ENCODE measurements at regions of chr1 and their contacts with region 1.

Region 1: DNA sequence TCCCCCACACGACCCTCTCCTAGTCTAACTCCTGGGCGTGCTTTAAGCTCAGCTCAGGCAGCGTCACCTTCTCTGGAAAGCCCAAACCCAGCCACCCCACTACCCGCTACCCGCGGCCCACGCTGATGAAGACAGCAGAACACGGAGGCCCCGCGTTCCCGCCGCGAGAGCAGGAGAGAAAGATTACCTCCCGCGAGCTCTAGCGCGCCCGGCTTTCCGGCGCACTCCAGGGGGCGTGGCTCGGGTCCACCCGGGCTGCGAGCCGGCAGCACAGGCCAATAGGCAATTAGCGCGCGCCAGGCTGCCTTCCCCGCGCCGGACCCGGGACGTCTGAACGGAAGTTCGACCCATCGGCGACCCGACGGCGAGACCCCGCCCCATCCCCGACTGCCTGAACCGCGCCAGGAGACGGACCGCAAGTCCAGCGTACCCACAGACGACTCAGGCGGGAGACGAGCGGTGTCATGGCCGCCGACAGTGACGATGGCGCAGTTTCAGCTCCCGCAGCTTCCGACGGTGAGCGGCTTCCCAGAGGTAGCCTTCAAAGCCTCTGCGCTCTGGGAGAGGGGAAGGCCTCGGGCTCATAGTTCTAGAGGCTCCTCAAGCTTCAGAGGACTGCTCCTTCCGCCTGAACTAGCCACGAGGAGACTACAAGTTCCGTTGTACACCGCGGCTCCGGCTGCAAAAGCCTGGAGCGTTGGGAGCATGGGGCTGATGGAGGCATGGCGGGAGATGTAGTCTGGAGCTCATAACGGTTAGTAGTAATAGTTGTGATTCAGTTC is at the starts of genes MUTYH and TOE1:
- DNase-seq: peak; percentile 92
- ATAC-seq: peak; percentile 88
- H3K4me3 ChIP-seq: peak within 1 kb of the TSS; percentile 83 to 97 (median 86)
- H3K4me3 Mint-ChIP-seq: peak within 1 kb of the TSS; percentile 91
- H3K27ac ChIP-seq: peak within 1 kb of the TSS; percentile 96
- H3K27ac Mint-ChIP-seq: peak within 1 kb of the TSS; percentile 100
- H3K4me1 ChIP-seq: peaks cover 20 to 33% of the 10 kb centered on the region in 2 donors
- H3K4me1 Mint-ChIP-seq: peaks cover 38% of the 10 kb centered on the region
- H3K27me3 ChIP-seq: no peaks in the 10 kb centered on the region
- H3K27me3 Mint-ChIP-seq: no peaks in the 10 kb centered on the region
- CTCF ChIP-seq: no peak
- total RNA-seq, gene MUTYH: 68.1 and 68.5 TPM in 2 replicates
- total RNA-seq, gene TOE1: 21.9 and 24.7 TPM in 2 replicates

Region 2: DNA sequence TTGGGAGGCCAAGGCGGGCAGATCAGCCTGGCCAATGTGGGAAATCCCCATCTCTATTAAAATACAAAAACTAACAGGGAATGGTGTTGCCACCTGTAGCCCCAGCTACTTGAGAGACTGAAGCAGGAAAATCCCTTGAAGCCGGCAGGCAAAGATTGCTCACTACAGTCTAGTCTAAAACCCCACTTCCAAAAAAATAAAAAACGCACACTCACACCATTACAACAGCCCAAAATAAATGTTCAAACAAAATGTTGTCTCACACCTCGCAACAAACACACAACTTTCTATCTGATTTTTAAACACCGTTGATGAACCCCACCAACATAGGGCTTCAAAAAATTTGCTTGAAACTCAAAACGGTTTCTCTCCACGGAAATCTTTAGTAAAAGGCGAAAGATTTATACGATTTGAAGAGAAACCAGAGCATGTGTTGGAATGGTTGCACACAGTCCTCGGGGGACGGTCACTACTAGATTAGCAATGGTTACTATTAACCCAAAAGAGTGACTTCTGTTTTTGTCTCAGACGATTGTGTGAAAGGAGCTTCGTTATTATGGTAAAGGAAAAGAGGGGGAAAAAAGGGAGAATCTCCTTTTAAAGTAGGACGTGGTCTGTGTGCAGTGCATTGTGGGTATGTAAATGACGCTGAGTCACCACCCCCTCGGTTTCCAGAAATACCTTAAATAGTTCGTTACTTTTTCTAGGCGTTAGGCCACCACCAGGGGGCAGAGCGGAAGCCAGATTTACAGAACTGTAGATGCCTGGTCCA is 609.1 kb before region 1 on chr1 and contains the start of gene RNU5D-1:
- CTCF ChIA-PET with region 1: interaction called, 10 read pairs
- POLR2A ChIA-PET with region 1: interaction called, 11 read pairs
- intact Hi-C with region 1: no loop called
- DNase-seq: peak; percentile 97
- ATAC-seq: peak; percentile 74
- H3K4me3 ChIP-seq: peak within 1 kb of the TSS; percentile 17 to 68 (median 50)
- H3K4me3 Mint-ChIP-seq: peak within 1 kb of the TSS; percentile 92
- H3K27ac ChIP-seq: peak within 1 kb of the TSS; percentile 93 to 96
- H3K27ac Mint-ChIP-seq: peak within 1 kb of the TSS; percentile 100
- H3K4me1 ChIP-seq: peaks cover 12 to 24% of the 10 kb centered on the region in 2 donors
- H3K4me1 Mint-ChIP-seq: peaks cover 24% of the 10 kb centered on the region
- H3K27me3 ChIP-seq: no peaks in the 10 kb centered on the region
- H3K27me3 Mint-ChIP-seq: no peaks in the 10 kb centered on the region
- CTCF ChIP-seq: peak; percentile 87
- total RNA-seq, gene RNU5D-1: not detected in 2 replicates

Region 3: DNA sequence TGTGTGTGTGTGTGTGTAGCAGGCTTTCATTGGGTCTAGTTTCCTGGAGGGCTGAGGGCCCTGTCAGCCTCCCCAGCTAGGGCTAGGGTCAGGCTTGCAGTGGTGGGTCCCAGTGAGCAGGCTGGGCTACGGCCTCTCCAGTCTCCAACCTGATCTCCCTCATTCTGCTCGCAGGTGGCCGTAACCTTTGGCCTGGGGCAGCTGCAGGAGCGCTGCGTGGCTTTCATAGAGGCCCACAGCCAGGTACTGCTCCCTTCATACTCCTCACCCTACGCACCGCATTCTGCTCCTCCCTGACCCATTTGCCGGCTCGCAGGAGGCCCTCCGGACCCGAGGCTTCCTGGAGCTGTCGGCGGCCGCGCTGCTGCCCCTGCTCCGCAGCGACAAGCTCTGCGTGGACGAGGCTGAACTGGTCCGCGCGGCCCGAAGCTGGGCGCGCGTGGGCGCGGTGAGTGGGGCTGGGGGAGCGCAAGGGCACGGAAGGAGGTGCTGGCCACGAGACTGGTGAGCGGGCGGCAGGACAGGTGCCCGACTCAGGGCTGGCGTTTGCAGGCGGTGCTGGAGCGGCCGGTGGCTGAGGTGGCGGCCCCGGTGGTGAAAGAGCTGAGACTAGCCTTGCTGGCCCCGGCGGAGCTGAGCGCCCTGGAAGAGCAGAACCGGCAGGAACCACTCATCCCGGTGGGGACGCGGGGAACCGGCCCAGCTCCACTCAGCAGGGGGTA is 527.0 kb before region 1 on chr1:
- CTCF ChIA-PET with region 1: no interaction called
- POLR2A ChIA-PET with region 1: no interaction called
- intact Hi-C with region 1: loop called (anchors 2 kb)
- DNase-seq: no peak
- ATAC-seq: no peak
- H3K4me3 ChIP-seq: peak overlapping the region in 4 of 5 experiments; percentile 51 to 76 (median 68)
- H3K4me3 Mint-ChIP-seq: peak overlapping the region; percentile 92
- H3K27ac ChIP-seq: peak overlapping the region; percentile 70 to 86
- H3K27ac Mint-ChIP-seq: peak overlapping the region; percentile 37
- H3K4me1 ChIP-seq: peaks cover 38 to 53% of the 10 kb centered on the region in 2 donors
- H3K4me1 Mint-ChIP-seq: peaks cover 58% of the 10 kb centered on the region
- H3K27me3 ChIP-seq: no peaks in the 10 kb centered on the region
- H3K27me3 Mint-ChIP-seq: no peaks in the 10 kb centered on the region
- CTCF ChIP-seq: no peak

Region 4: DNA sequence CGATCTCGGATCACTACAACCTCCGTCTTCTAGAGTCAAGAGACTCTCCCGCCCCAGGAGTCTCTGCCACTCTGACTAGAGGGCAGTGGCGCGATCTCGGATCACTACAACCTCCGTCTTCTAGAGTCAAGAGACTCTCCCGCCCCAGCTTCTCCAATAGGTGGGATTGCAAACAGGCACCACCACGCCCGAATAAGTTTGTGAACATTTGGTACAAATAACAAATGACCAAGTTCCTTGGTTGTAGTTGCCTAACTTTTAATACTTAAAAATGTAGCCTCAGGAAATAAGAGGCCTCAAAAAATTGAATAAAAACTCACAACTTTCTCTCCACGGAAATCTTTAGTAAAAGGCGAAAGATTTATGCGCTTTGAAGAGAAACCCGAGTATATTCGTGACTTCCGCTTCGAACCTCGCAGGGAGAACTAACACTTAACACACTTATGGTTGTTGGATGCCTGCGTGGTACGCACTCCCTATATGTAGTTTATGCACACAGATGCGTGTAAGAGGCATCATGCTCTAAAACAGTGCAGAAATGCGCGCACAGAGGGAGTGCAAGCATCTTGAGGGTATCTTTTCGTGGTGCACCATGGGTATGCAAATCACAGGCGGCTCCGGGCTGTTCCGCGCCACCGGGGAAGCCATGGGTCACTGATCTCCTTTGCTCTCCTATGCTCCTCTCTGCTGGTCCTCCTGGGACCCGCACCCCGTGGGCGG is 520.2 kb before region 1 on chr1:
- CTCF ChIA-PET with region 1: no interaction called
- POLR2A ChIA-PET with region 1: no interaction called
- intact Hi-C with region 1: loop called (anchors 1 kb)
- DNase-seq: peak; percentile 95
- ATAC-seq: peak; percentile 82
- H3K4me3 ChIP-seq: peak overlapping the region; percentile 56 to 80 (median 66)
- H3K4me3 Mint-ChIP-seq: peak overlapping the region; percentile 93
- H3K27ac ChIP-seq: peak overlapping the region; percentile 99 to 100
- H3K27ac Mint-ChIP-seq: peak overlapping the region; percentile 100
- H3K4me1 ChIP-seq: peaks cover 16 to 24% of the 10 kb centered on the region in 2 donors
- H3K4me1 Mint-ChIP-seq: peaks cover 35% of the 10 kb centered on the region
- H3K27me3 ChIP-seq: no peaks in the 10 kb centered on the region
- H3K27me3 Mint-ChIP-seq: no peaks in the 10 kb centered on the region
- CTCF ChIP-seq: no peak

Region 5: GRCh38 chr1:45326627-45327623 is 13.1 kb before region 1 on chr1 and contains the start of gene HPDL:
- CTCF ChIA-PET with region 1: interaction called, 8 read pairs
- POLR2A ChIA-PET with region 1: interaction called, 18 read pairs
- intact Hi-C with region 1: loop called (anchors 1 kb)
- DNase-seq: peak; percentile 74
- ATAC-seq: peak; percentile 88
- H3K4me3 ChIP-seq: peak within 1 kb of the TSS; percentile 47 to 70 (median 63)
- H3K4me3 Mint-ChIP-seq: peak within 1 kb of the TSS; percentile 89
- H3K27ac ChIP-seq: no peak within 1 kb of the TSS
- H3K27ac Mint-ChIP-seq: peak within 1 kb of the TSS; percentile 15
- H3K4me1 ChIP-seq: peaks cover 8 to 20% of the 10 kb centered on the region in 2 donors
- H3K4me1 Mint-ChIP-seq: peaks cover 13% of the 10 kb centered on the region
- H3K27me3 ChIP-seq: peaks cover 0 to 5% (median 2%) of the 10 kb centered on the region in 4 experiments
- H3K27me3 Mint-ChIP-seq: no peaks in the 10 kb centered on the region
- CTCF ChIP-seq: no peak
- total RNA-seq, gene HPDL: 0.79 and 0.85 TPM in 2 replicates

Region 6: DNA sequence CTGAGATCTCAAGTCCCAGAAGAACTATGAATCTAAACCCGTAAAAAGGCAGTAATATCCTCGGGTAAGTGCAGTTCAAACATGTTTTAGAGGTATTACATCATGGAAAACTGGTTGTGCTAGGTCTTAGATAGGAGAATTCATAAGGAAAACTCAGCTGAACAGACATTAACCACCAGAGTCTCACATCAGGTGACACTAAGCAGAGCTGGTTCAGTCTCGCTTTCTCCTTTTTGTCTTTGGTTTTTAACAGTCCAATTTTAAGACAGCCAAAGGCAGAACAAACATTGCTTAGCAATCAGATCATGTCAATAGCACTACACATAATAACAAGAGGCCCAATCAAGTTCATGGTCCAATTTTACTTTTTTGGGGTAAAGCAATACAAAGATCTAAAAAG is 63.3 kb after region 1 on chr1:
- CTCF ChIA-PET with region 1: no interaction called
- POLR2A ChIA-PET with region 1: no interaction called
- intact Hi-C with region 1: no loop called
- DNase-seq: no peak
- ATAC-seq: no peak
- H3K4me3 ChIP-seq: no peak overlapping the region
- H3K4me3 Mint-ChIP-seq: no peak overlapping the region
- H3K27ac ChIP-seq: no peak overlapping the region
- H3K27ac Mint-ChIP-seq: peak overlapping the region; percentile 59
- H3K4me1 ChIP-seq: peaks cover 7 to 10% of the 10 kb centered on the region in 2 donors
- H3K4me1 Mint-ChIP-seq: peaks cover 31% of the 10 kb centered on the region
- H3K27me3 ChIP-seq: no peaks in the 10 kb centered on the region
- H3K27me3 Mint-ChIP-seq: no peaks in the 10 kb centered on the region
- CTCF ChIP-seq: no peak

Region 7: DNA sequence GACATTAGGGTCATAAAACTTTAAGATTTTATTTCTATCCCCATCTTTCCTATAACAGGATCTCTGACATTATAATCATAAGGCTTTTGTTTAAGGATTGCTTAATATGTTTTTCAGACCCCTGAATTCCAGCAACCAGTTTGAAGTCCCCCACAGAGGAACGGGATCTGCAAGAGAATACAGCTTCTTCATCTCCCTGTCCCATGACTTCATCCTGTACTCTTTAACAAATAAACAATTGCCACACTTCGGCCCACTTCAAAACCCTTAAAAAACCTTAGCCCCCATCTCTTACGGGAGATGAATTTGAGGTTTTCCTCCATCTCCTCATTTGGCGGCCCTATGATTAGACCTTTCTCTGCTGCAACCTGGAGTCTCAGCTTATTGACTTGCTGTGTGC is 115.2 kb after region 1 on chr1:
- CTCF ChIA-PET with region 1: no interaction called
- POLR2A ChIA-PET with region 1: no interaction called
- intact Hi-C with region 1: no loop called
- DNase-seq: no peak
- ATAC-seq: no peak
- H3K4me3 ChIP-seq: no peak overlapping the region
- H3K4me3 Mint-ChIP-seq: no peak overlapping the region
- H3K27ac ChIP-seq: no peak overlapping the region
- H3K27ac Mint-ChIP-seq: no peak overlapping the region
- H3K4me1 ChIP-seq: no peaks in the 10 kb centered on the region
- H3K4me1 Mint-ChIP-seq: peaks cover 11% of the 10 kb centered on the region
- H3K27me3 ChIP-seq: no peaks in the 10 kb centered on the region
- H3K27me3 Mint-ChIP-seq: no peaks in the 10 kb centered on the region
- CTCF ChIP-seq: no peak

Region 8: DNA sequence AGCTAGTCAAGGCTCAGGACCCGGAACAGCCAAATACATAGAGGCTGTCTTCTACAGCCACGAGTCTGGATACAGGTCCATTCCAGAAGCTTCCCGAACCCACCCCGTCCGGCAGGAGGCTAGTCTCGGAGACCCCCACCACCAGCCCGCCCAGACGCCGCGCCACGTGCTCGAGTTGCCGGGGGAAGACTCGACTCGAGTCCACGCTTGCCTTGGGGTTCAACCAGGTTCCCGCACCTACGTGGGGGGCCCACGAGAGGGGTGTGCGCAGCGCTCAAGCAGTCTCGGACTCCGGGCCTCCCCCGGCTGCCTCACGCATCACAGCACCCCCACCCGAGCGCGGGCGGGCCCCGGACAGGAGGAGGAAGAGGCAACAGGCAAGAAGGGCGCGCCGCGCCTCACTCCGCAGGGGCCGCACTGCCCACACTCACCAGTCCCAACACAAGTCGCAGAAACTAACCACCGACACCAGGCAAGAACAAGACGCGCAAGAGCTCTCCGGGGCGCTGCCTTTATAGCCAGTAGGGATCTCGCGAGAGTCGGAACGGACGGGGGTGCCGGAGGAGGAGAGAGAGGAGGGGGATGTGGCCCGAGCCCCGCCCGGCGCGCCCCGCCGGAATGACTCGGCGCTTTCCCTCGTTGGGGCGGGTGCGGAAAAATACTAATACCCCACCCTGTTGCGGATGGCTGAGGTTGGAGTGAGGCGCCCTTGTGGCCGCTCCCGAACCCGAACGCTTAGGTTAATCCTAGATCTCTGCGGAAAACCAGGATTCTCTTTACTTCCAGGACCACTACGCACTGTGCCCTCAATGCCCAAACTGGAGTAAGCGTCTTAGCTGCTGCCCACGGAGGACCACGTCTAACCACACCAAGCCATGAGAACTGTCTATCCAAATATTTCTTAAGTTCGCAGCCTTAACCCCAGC is 181.7 kb after region 1 on chr1 and contains the start of gene PRDX1:
- CTCF ChIA-PET with region 1: interaction called, 4 read pairs
- POLR2A ChIA-PET with region 1: interaction called, 11 read pairs
- intact Hi-C with region 1: no loop called
- DNase-seq: peak; percentile 98
- ATAC-seq: peak; percentile 86
- H3K4me3 ChIP-seq: peak within 1 kb of the TSS; percentile 75 to 97 (median 82)
- H3K4me3 Mint-ChIP-seq: peak within 1 kb of the TSS; percentile 95
- H3K27ac ChIP-seq: peak within 1 kb of the TSS; percentile 80 to 82
- H3K27ac Mint-ChIP-seq: peak within 1 kb of the TSS; percentile 98
- H3K4me1 ChIP-seq: peaks cover 16 to 31% of the 10 kb centered on the region in 2 donors
- H3K4me1 Mint-ChIP-seq: peaks cover 34% of the 10 kb centered on the region
- H3K27me3 ChIP-seq: no peaks in the 10 kb centered on the region
- H3K27me3 Mint-ChIP-seq: no peaks in the 10 kb centered on the region
- CTCF ChIP-seq: no peak
- total RNA-seq, gene PRDX1: 96.5 and 104 TPM in 2 replicates